ENCODE measurements at regions of chr5 and their contacts with region 1.

Region 1: DNA sequence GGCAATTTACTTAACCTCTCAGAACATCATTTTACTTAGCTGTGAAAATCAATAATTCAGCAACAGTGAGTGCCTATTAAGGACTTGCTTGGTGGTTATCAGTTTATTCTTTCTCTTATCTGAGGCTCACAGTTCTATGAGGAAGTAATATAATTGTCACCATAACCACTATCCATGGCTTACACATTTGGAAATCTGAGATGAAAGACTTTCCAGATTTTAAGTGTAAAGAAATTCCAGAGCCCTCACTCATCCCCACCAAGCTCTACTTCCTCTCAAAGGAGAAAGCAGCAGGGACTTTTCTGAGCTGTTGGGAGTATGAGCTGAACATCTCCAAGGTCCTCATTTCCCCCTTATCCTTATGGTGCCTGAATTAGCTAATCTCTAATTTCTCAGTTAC is 321.5 kb downstream of the FBXL7 start:
- DNase-seq: no peak
- ATAC-seq: no peak

Region 2: GRCh38 chr5:15105796-15106393 is 715.6 kb before region 1 on chr5:
- intact Hi-C with region 1: loop called (anchors 10 kb)
- DNase-seq: no peak
- ATAC-seq: peak; percentile 54

Region 3: DNA sequence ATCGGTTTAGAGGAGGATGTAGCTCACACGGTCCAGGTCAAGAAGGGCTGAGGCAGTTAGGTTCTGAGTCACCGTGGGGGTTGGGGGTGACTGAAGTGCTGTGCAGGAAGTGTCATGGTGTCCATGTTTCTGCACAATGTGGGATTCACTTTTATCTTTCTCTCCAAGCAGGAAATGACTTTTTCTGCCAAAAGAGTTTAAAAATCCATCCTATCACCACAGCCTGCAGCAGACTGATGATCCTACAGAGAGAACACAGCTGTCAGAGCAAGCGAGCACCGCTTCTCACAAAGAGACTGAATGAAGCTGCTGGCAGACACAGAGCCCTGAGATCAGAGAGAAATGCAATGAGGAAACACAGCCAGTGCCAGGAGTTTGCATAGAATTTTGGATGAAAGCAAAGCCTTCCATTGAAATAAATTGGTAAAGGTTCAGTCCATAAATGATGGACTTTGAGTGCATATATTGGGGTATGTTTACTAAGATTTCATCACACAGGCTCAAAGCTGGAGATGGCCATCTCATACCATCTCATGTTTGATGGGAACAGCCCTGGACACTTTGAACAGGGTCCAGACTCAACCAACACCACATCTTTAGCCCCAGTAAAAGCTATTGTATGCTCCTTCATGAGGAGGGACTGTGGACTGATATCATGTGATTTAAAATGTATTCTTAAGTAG is 535.5 kb before region 1 on chr5:
- intact Hi-C with region 1: loop called (anchors 10 kb)
- DNase-seq: no peak
- ATAC-seq: peak; percentile 69

Region 4: DNA sequence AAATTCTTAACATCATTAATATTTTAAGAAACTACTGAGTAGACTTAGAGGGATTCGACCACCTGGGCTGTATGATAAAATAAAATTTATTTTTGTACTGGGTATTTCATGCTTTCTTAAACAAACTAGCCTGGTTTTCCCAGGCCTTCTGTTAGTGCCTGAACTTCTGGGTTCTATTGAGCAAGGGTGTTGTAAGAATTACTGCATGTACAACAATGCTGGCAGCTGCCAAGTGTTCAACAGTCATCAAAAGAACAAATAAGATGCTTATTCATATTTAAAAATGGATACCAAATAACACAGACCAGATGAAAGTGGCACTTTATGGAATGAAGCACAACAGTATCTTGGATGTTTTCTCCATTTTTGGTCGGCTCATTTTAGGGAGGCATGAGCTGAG is 444.7 kb before region 1 on chr5:
- intact Hi-C with region 1: loop called (anchors 10 kb)
- DNase-seq: no peak
- ATAC-seq: peak; percentile 56

Region 5: GRCh38 chr5:15463231-15463980 is 358.1 kb before region 1 on chr5:
- intact Hi-C with region 1: loop called (anchors 5 kb)
- DNase-seq: no peak
- ATAC-seq: peak; percentile 20

Region 6: DNA sequence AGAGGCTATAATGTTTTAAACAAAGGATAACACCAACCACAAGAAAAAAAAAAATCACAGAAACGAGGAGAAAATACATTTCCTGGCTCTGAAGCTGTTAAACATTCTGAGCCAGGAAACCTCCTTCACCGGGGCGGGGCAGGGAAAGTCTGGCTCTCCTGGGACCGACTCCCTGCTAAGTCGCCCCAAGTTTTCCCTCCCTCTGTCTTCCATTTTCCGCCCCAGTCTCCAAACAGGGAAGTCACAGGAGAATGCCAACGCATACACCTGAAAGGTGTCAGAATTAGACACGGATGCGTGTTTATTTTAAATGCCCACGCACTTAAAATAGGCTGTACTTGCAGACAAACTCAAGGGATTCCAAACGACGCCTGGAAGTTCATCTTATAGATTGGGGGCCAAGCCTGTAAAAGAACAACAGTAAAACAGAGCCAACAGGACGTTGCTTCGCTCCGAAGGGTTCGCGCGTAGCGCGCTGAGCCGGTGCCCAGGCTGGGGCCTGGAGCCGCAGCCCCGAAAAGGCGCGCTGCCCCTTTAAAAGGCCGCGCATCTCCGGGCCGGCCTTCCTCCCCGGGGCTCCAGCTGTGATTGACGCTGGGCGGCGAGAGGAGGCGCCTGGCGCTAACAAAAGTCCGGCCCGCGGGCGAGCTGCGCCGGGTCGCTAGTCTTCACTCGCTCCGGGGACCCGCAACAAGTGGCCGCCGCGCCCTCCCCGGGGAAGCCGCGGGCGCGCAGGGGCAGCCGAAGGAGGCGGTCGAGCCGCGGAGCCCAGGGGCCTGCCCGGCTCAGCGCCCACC is 321.8 kb before region 1 on chr5 and contains the start of gene FBXL7:
- intact Hi-C with region 1: loop called (anchors 5 kb)
- DNase-seq: peak; percentile 91
- ATAC-seq: peak; percentile 89
- total RNA-seq, gene FBXL7: 17.8 TPM